ENCODE measurements at regions of chr11 and their contacts with region 1.

Region 1: GRCh38 chr11:72585762-72586311 is 88.4 kb downstream of the PDE2A start:
- DNase-seq: peak; percentile 25 to 86 (median 56)
- ATAC-seq: peak; percentile 80
- H3K4me3 ChIP-seq: peak overlapping the region in 1 of 2 experiments; percentile 36
- H3K4me3 Mint-ChIP-seq: peak overlapping the region; percentile 87
- H3K27ac ChIP-seq: no peak overlapping the region
- H3K27ac Mint-ChIP-seq: peak overlapping the region; percentile 39
- H3K4me1 ChIP-seq: peaks cover 29% of the 10 kb centered on the region
- H3K4me1 Mint-ChIP-seq: peaks cover 27% of the 10 kb centered on the region
- H3K27me3 ChIP-seq: peaks cover 5 to 9% of the 10 kb centered on the region in 2 experiments
- H3K27me3 Mint-ChIP-seq: peaks cover 30% of the 10 kb centered on the region
- CTCF ChIP-seq: peak; percentile 85

Region 2: DNA sequence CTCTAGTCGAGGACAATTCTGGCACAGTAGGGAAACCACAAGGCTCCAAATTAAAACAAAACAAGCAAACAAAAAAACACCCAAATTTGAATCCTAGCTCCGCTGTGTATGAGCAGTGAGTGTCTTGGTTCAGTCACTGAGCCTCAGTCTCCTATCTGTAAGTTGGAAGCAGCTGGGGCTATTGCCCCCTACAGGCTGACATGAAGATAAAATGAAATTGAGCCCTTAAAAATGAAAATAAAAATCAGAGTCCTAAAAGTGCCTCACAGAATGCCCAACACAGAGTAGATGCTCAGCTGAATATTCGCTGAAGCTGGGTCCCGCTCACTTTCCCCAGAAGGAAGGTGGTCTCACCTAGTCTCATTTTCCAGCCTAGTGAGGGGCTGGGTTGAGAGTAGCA is 23.2 kb after region 1 on chr11:
- CTCF ChIA-PET with region 1: interaction called, 18 read pairs
- POLR2A ChIA-PET with region 1: no interaction called
- intact Hi-C with region 1: loop called (anchors 1 kb)
- DNase-seq: peak in 3 of 9 experiments; percentile 19 to 54 (median 33)
- ATAC-seq: peak; percentile 62
- H3K4me3 ChIP-seq: no peak overlapping the region
- H3K4me3 Mint-ChIP-seq: no peak overlapping the region
- H3K27ac ChIP-seq: no peak overlapping the region
- H3K27ac Mint-ChIP-seq: no peak overlapping the region
- H3K4me1 ChIP-seq: no peaks in the 10 kb centered on the region
- H3K4me1 Mint-ChIP-seq: peaks cover 1% of the 10 kb centered on the region
- H3K27me3 ChIP-seq: no peaks in the 10 kb centered on the region
- H3K27me3 Mint-ChIP-seq: peaks cover 45% of the 10 kb centered on the region
- CTCF ChIP-seq: peak; percentile 43

Region 3: DNA sequence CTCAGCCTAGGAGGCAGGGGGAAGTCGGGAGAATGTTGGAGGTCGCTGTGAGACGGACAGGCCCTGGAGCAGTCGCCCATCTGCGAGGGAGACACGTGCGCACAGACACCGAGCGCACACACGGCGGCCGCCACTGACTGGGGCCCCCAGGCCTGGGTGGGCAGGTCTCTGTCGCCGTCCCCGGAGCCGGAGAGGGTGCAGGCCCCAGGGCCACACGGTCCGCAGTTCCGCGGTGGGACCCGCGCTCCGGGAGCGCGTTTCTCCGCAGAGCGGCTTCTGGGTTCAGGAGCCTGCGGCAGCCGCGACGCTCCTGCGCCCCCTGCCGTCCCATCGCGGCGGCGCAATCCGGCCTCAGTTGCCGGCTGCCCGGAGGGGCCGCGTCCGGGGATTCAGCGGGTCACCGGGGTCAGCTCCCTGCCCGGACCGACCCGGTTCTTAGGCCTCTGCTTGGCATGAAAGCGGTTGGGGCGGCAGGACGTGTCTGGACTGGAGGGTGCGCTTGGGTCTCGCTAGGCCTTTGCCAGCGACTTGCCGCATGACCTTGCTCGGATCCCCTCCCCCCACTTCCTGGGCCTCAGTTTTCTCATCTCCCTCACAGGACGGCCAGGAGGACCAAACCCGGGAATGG is 57.2 kb after region 1 on chr11:
- CTCF ChIA-PET with region 1: interaction called, 65 read pairs
- POLR2A ChIA-PET with region 1: no interaction called
- intact Hi-C with region 1: loop called (anchors 1 kb)
- DNase-seq: peak; percentile 40 to 80 (median 56)
- ATAC-seq: peak; percentile 86
- H3K4me3 ChIP-seq: peak overlapping the region; percentile 51 to 54
- H3K4me3 Mint-ChIP-seq: peak overlapping the region; percentile 77
- H3K27ac ChIP-seq: no peak overlapping the region
- H3K27ac Mint-ChIP-seq: no peak overlapping the region
- H3K4me1 ChIP-seq: peaks cover 3% of the 10 kb centered on the region
- H3K4me1 Mint-ChIP-seq: peaks cover 2% of the 10 kb centered on the region
- H3K27me3 ChIP-seq: peaks cover 8 to 22% of the 10 kb centered on the region in 2 experiments
- H3K27me3 Mint-ChIP-seq: peaks cover 5% of the 10 kb centered on the region
- CTCF ChIP-seq: peak; percentile 95

Region 4: GRCh38 chr11:72683782-72684200 is 98.0 kb after region 1 on chr11:
- CTCF ChIA-PET with region 1: interaction called, 38 read pairs
- POLR2A ChIA-PET with region 1: interaction called, 3 read pairs
- intact Hi-C with region 1: loop called in 1 of 2 experiments (anchors 1 kb)
- DNase-seq: peak; percentile 48 to 80 (median 66)
- ATAC-seq: peak; percentile 82
- H3K4me3 ChIP-seq: no peak overlapping the region
- H3K4me3 Mint-ChIP-seq: no peak overlapping the region
- H3K27ac ChIP-seq: no peak overlapping the region
- H3K27ac Mint-ChIP-seq: peak overlapping the region; percentile 27
- H3K4me1 ChIP-seq: peaks cover 6% of the 10 kb centered on the region
- H3K4me1 Mint-ChIP-seq: peaks cover 15% of the 10 kb centered on the region
- H3K27me3 ChIP-seq: no peaks in the 10 kb centered on the region
- H3K27me3 Mint-ChIP-seq: no peaks in the 10 kb centered on the region
- CTCF ChIP-seq: peak; percentile 90

Region 5: DNA sequence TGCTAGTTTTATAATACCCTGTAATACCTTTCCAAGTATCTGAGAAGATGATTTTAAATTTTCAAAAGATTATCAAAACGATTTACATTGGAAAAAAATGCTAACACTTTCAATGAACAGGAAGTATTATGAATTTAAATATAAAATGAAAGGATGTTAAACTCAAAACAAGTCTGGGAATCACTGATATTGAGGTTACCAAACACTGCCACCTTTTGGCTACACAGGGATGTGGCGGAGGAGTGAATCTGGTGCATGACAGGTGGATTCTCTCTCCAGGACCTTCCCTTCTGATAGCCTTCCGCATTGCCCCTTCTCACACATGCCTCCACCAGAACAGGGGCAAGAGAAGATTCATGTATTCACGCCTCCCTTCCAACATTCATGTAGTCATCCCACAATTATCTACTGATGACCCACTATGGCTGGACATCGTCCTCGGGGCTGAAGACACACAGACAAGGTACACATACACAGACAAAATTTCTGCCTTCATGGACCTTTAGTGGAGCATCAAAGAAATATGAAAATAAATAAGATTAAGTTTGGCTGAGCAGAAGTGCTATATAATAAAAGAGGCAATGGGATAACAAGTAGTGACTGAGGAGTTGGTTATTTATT is 263.1 kb after region 1 on chr11:
- CTCF ChIA-PET with region 1: no interaction called
- POLR2A ChIA-PET with region 1: no interaction called
- intact Hi-C with region 1: loop called in 1 of 2 experiments (anchors 2 kb)
- DNase-seq: peak in 5 of 9 experiments; percentile 29 to 67 (median 46)
- ATAC-seq: peak; percentile 71
- H3K4me3 ChIP-seq: no peak overlapping the region
- H3K4me3 Mint-ChIP-seq: no peak overlapping the region
- H3K27ac ChIP-seq: no peak overlapping the region
- H3K27ac Mint-ChIP-seq: no peak overlapping the region
- H3K4me1 ChIP-seq: no peaks in the 10 kb centered on the region
- H3K4me1 Mint-ChIP-seq: peaks cover 5% of the 10 kb centered on the region
- H3K27me3 ChIP-seq: no peaks in the 10 kb centered on the region
- H3K27me3 Mint-ChIP-seq: no peaks in the 10 kb centered on the region
- CTCF ChIP-seq: peak; percentile 61